K562 (cell line): ENCODE measurements at regions of chr3 and their contacts with region 1.

Region 1: GRCh38 chr3:23916886-23917678 is at the starts of genes NKIRAS1 and RPL15:
- DNase-seq: peak; percentile 94 to 99 (median 96)
- ATAC-seq: peak; percentile 93
- H3K4me3 ChIP-seq: peak within 1 kb of the TSS; percentile 73
- H3K27ac ChIP-seq: peak within 1 kb of the TSS; percentile 91
- H3K4me1 ChIP-seq: peaks cover 6 to 19% of the 10 kb centered on the region in 2 experiments
- H3K27me3 ChIP-seq: no peaks in the 10 kb centered on the region
- CTCF ChIP-seq: peak; percentile 28 to 45 (median 37); a peak in 4 of 6 replicates
- EP300 ChIP-seq: peak; percentile 47
- POLR2A ChIP-seq: peak; percentile 100
- RAD21 ChIP-seq: no peak; a peak in 1 of 4 replicates
- polyA plus RNA-seq, gene NKIRAS1: 5.5 to 5.6 TPM
- polyA plus RNA-seq, gene RPL15: 7,800 to 8,850 TPM

Region 2: DNA sequence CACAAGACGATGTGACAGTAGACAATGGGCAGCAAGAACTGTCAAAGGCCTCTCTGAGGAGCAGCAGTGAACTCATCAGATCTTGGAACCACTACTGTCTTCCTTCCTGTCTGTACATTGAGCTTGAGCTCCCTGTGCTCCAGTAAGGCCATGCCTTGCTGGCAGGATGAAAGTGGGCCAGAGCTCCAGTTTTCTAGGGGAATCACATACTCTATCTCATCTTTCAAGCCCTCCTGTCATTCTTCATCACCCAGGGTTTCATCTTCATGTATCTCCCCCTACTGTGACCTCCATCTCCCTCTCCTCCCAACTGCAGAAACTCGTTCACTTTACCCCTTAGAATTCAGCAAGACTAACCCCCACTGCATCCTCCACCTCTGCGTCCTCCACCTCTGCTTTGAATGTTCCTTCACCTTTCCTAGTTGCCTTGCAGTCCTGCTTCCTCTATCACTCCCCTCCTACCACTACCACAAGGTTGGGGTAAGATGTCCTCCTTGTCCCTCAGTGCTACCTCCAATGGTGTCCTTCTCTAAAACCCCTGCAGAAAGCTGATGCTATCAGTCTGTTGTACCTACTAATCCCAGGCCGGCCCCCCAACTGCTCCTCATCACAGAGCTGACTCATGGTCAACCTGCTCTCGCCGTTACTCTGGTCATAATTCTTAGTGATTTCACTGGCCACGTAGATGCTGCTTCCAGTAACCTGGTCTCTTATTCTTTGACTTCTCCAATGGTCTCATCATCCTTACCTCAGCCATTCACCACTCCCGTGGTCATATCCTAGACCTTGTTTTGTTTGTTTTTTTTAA is 22.6 kb before region 1 on chr3:
- CTCF ChIA-PET with region 1: no interaction called
- POLR2A ChIA-PET with region 1: interaction called, 35 read pairs
- in situ Hi-C with region 1: no loop called
- intact Hi-C with region 1: no loop called
- DNase-seq: peak in 2 of 4 experiments; percentile 25 to 37
- ATAC-seq: peak; percentile 70
- H3K4me3 ChIP-seq: no peak overlapping the region
- H3K27ac ChIP-seq: no peak overlapping the region
- H3K4me1 ChIP-seq: peaks cover 0 to 12% of the 10 kb centered on the region in 2 experiments; a peak in 3 of 5 replicates
- H3K27me3 ChIP-seq: no peaks in the 10 kb centered on the region
- CTCF ChIP-seq: no peak
- EP300 ChIP-seq: no peak
- POLR2A ChIP-seq: no peak; the same call in 1 of the 2 replicates
- RAD21 ChIP-seq: no peak

Region 3: GRCh38 chr3:23900744-23901143 is 16.3 kb before region 1 on chr3:
- CTCF ChIA-PET with region 1: no interaction called
- POLR2A ChIA-PET with region 1: interaction called, 71 read pairs
- in situ Hi-C with region 1: no loop called
- intact Hi-C with region 1: no loop called
- DNase-seq: no peak
- ATAC-seq: peak; percentile 43; the same call in 2 of the 3 replicates
- H3K4me3 ChIP-seq: no peak overlapping the region
- H3K27ac ChIP-seq: no peak overlapping the region
- H3K4me1 ChIP-seq: peaks cover 1 to 8% of the 10 kb centered on the region in 2 experiments; a peak in 3 of 5 replicates
- H3K27me3 ChIP-seq: no peaks in the 10 kb centered on the region
- CTCF ChIP-seq: no peak
- EP300 ChIP-seq: no peak
- POLR2A ChIP-seq: no peak
- RAD21 ChIP-seq: peak in 1 of 2 experiments; percentile 5; a peak in 1 of 4 replicates

Region 4: DNA sequence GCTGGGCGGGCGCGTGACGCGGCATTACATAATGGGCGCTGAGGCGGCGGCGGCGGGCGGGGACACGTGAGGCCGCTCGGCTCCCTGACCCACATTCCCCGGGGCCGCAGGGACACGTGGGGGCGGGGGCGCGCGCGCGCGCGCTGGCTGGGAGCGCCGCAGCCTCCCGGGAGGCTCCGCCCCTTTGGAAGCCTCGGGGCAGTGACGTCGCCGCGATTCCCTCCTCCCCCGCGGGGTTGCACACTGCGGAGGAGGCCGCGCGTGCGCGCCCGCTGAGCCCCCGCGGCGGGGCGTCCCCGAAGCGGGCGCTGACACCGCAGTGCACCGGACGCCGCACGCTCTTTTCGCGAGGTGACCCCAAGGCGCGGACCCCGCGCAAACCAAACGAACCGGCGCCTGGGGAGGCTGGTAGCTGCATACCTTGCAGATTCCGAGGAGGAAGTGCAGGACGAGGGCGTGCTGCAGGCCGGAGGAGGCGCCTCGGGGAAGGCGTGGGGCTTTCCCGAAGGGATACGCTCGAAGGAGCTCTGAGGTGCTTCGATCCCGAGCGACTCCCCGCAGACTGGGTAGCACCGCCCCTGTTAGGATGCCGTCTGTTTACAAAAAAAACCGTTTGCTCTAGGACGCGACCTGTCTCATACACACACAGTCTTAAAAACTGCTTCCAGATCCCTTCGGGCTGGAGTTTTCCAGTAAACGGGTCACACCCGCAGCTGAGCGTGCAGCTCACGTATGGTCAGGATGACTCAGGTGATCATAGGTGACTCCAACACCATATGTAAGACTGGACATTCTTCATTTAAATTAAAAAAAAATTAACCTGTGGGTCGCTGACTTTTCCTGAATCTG is 29.0 kb after region 1 on chr3:
- CTCF ChIA-PET with region 1: no interaction called
- POLR2A ChIA-PET with region 1: interaction called, 165 read pairs
- in situ Hi-C with region 1: no loop called
- intact Hi-C with region 1: loop called (anchors 1 kb)
- DNase-seq: peak; percentile 99
- ATAC-seq: peak; percentile 84
- H3K4me3 ChIP-seq: peak overlapping the region; percentile 59
- H3K27ac ChIP-seq: peak overlapping the region; percentile 82
- H3K4me1 ChIP-seq: peaks cover 17 to 46% of the 10 kb centered on the region in 2 experiments
- H3K27me3 ChIP-seq: no peaks in the 10 kb centered on the region
- CTCF ChIP-seq: no peak
- EP300 ChIP-seq: no peak; the same call in 1 of the 2 replicates
- POLR2A ChIP-seq: peak; percentile 73
- RAD21 ChIP-seq: peak in 1 of 2 experiments; percentile 3; a peak in 2 of 4 replicates

Region 5: DNA sequence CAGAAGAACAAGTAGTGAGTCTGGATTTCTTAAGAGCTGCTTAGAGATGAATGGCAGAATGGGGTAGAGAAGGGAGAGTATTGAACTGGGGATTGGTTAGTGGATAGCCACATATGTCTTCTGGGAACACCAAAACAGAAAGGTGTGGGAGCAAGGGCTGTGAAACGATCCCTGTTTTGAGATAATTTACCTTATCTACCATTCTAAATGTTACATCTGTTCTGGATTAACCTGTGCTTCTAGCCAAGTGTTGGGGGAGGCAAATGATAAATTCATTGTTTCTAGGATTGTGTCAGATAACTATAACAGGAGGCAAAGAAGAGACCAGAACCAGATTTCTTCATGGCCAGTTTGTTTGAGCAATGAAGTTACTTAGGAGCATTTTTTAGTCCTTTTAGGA is 36.4 kb after region 1 on chr3:
- CTCF ChIA-PET with region 1: no interaction called
- POLR2A ChIA-PET with region 1: interaction called, 11 read pairs
- in situ Hi-C with region 1: no loop called
- intact Hi-C with region 1: no loop called
- DNase-seq: peak in 2 of 4 experiments; percentile 21 to 35
- ATAC-seq: peak; percentile 29
- H3K4me3 ChIP-seq: no peak overlapping the region
- H3K27ac ChIP-seq: no peak overlapping the region
- H3K4me1 ChIP-seq: peaks cover 0 to 14% of the 10 kb centered on the region in 2 experiments; a peak in 2 of 5 replicates
- H3K27me3 ChIP-seq: no peaks in the 10 kb centered on the region
- CTCF ChIP-seq: no peak
- EP300 ChIP-seq: peak; percentile 36; the same call in 1 of the 2 replicates
- POLR2A ChIP-seq: no peak
- RAD21 ChIP-seq: no peak